CD4-positive, alpha-beta memory T cell (primary cell): ENCODE measurements at regions of chr7 and their contacts with region 1.

Region 1: GRCh38 chr7:125007327-125007726 is 77.7 kb upstream of the POT1 start:
- DNase-seq: no peak
- H3K4me3 ChIP-seq: no peak overlapping the region
- H3K4me3 Mint-ChIP-seq: no peak overlapping the region
- H3K27ac ChIP-seq: no peak overlapping the region
- H3K27ac Mint-ChIP-seq: no peak overlapping the region
- H3K4me1 ChIP-seq: no peaks in the 10 kb centered on the region
- H3K4me1 Mint-ChIP-seq: no peaks in the 10 kb centered on the region
- H3K27me3 ChIP-seq: no peaks in the 10 kb centered on the region
- H3K27me3 Mint-ChIP-seq: no peaks in the 10 kb centered on the region

Region 2: DNA sequence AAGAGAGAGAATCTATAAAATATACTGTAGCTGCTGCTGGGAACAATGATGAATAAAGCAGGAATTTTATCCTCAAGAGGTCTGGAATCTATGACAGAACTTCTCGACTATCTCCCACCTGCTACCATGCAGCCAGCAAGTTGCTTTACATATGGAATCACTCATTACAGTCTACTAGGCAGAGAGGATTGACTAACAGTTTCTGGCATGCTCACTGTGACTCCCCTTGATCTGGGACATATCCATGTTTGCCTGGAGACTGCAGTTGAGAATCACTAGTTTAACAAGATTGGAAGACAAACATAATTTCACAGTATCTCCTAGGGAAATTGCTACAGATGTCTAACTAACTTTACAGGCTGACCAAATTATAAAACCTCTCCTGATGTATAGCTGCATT is 255.0 kb before region 1 on chr7:
- CTCF ChIA-PET with region 1: no interaction called
- POLR2A ChIA-PET with region 1: no interaction called
- intact Hi-C with region 1: no loop called
- DNase-seq: no peak
- H3K4me3 ChIP-seq: no peak overlapping the region
- H3K4me3 Mint-ChIP-seq: no peak overlapping the region
- H3K27ac ChIP-seq: no peak overlapping the region
- H3K27ac Mint-ChIP-seq: no peak overlapping the region
- H3K4me1 ChIP-seq: no peaks in the 10 kb centered on the region
- H3K4me1 Mint-ChIP-seq: no peaks in the 10 kb centered on the region
- H3K27me3 ChIP-seq: no peaks in the 10 kb centered on the region
- H3K27me3 Mint-ChIP-seq: peaks cover 2 to 4% of the 10 kb centered on the region in 2 donors

Region 3: GRCh38 chr7:124965553-124965952 is 41.8 kb before region 1 on chr7:
- CTCF ChIA-PET with region 1: no interaction called
- POLR2A ChIA-PET with region 1: no interaction called
- intact Hi-C with region 1: no loop called
- DNase-seq: no peak
- H3K4me3 ChIP-seq: no peak overlapping the region
- H3K4me3 Mint-ChIP-seq: no peak overlapping the region
- H3K27ac ChIP-seq: no peak overlapping the region
- H3K27ac Mint-ChIP-seq: no peak overlapping the region
- H3K4me1 ChIP-seq: no peaks in the 10 kb centered on the region
- H3K4me1 Mint-ChIP-seq: no peaks in the 10 kb centered on the region
- H3K27me3 ChIP-seq: no peaks in the 10 kb centered on the region
- H3K27me3 Mint-ChIP-seq: no peaks in the 10 kb centered on the region

Region 4: GRCh38 chr7:124996778-124997177 is 10.5 kb before region 1 on chr7:
- CTCF ChIA-PET with region 1: no interaction called
- POLR2A ChIA-PET with region 1: no interaction called
- intact Hi-C with region 1: loop called (anchors 1 kb)
- DNase-seq: no peak
- H3K4me3 ChIP-seq: no peak overlapping the region
- H3K4me3 Mint-ChIP-seq: no peak overlapping the region
- H3K27ac ChIP-seq: no peak overlapping the region
- H3K27ac Mint-ChIP-seq: no peak overlapping the region
- H3K4me1 ChIP-seq: no peaks in the 10 kb centered on the region
- H3K4me1 Mint-ChIP-seq: no peaks in the 10 kb centered on the region
- H3K27me3 ChIP-seq: no peaks in the 10 kb centered on the region
- H3K27me3 Mint-ChIP-seq: peaks cover 0 to 1% of the 10 kb centered on the region in 2 donors